ENCODE measurements at regions of chr17 and their contacts with region 1.

Region 1: DNA sequence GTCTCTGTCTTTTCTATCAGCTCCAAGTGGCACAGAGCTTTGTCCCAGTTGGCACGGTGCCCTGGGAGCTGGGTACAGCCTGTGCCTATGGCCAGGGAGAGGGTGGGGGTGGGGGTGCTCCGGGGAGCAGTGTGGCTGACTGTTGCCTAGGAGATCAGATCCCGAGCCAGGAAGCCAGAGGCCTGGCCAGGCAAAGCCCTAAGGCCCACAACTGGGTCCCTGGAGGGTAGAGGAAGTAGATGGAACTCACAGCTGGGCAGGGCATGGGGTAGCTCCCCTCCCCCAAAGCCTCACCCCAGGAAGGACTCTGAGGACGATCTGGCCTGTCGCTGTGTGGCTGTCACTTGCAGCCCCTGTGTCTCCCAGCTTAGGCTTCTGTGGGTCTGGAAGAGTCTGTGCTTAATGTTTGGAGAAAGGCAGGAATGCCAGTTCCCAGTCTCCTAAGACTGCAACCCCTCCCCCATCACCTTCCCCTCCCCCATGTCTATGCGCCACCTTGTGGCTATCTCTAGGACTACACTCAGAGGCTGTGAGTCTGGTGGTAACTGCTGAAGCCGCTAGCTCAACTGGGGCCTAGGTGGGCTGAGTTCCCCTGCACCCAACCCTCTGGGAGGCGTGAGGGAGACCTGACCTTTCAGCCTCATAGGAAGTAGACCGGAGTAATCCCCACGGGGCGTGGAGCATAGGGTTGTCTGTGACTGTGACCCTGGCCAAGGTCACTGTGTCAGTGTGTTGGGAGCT is 12.6 kb downstream of the THRA start:
- DNase-seq: peak; percentile 63
- H3K4me3 ChIP-seq: no peak overlapping the region
- H3K27ac ChIP-seq: no peak overlapping the region
- H3K4me1 ChIP-seq: peaks cover 13% of the 10 kb centered on the region
- H3K27me3 ChIP-seq: no peaks in the 10 kb centered on the region
- CTCF ChIP-seq: peak; percentile 68 to 91
- POLR2A ChIP-seq: no peak

Region 2: GRCh38 chr17:40026816-40027613 is 48.4 kb before region 1 on chr17:
- CTCF ChIA-PET with region 1: interaction called, 11 read pairs
- POLR2A ChIA-PET with region 1: no interaction called
- dilution Hi-C with region 1: no loop called
- intact Hi-C with region 1: no loop called
- DNase-seq: peak; percentile 74
- H3K4me3 ChIP-seq: no peak overlapping the region
- H3K27ac ChIP-seq: peak overlapping the region; percentile 99
- H3K4me1 ChIP-seq: peaks cover 48% of the 10 kb centered on the region
- H3K27me3 ChIP-seq: no peaks in the 10 kb centered on the region
- CTCF ChIP-seq: peak; percentile 81 to 93
- POLR2A ChIP-seq: no peak

Region 3: DNA sequence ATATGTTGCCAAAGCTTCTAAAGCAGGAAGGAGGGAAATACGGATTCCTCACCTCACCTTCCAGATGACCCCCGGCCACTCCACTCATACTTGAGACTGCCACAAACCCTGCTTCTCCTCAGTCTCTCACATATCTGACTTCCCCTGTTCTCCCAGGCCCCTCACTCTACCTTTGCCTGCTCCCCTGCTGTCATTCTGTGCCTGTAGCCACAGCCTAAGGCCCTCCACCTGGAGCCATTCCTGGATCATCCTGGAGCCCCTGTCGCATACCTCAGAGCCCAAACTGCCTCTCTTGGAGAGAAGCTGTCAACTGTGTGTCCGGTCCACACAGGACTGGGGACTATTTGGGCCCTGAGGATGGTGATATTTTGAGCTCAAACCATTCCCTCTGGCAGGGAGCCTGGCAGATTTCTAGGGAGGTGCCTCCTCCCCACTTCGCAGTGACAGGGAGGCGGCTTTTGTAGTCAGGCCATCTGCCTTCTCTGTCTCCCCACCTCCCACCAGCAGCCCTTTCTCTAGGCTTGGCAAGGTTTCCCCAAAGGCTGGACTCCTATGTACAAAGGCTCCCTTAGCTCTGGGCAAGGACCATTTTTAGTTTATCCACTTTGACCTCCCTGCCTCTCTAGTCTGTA is 18.9 kb before region 1 on chr17:
- CTCF ChIA-PET with region 1: interaction called, 34 read pairs
- POLR2A ChIA-PET with region 1: no interaction called
- dilution Hi-C with region 1: no loop called
- intact Hi-C with region 1: no loop called
- DNase-seq: no peak
- H3K4me3 ChIP-seq: no peak overlapping the region
- H3K27ac ChIP-seq: no peak overlapping the region
- H3K4me1 ChIP-seq: peaks cover 6% of the 10 kb centered on the region
- H3K27me3 ChIP-seq: no peaks in the 10 kb centered on the region
- CTCF ChIP-seq: no peak
- POLR2A ChIP-seq: no peak

Region 4: GRCh38 chr17:40086150-40087044 is 11.0 kb after region 1 on chr17:
- CTCF ChIA-PET with region 1: interaction called, 62 read pairs
- POLR2A ChIA-PET with region 1: no interaction called
- dilution Hi-C with region 1: no loop called
- intact Hi-C with region 1: no loop called
- DNase-seq: peak; percentile 40
- H3K4me3 ChIP-seq: no peak overlapping the region
- H3K27ac ChIP-seq: no peak overlapping the region
- H3K4me1 ChIP-seq: no peaks in the 10 kb centered on the region
- H3K27me3 ChIP-seq: no peaks in the 10 kb centered on the region
- CTCF ChIP-seq: peak; percentile 80 to 89
- POLR2A ChIP-seq: no peak

Region 5: DNA sequence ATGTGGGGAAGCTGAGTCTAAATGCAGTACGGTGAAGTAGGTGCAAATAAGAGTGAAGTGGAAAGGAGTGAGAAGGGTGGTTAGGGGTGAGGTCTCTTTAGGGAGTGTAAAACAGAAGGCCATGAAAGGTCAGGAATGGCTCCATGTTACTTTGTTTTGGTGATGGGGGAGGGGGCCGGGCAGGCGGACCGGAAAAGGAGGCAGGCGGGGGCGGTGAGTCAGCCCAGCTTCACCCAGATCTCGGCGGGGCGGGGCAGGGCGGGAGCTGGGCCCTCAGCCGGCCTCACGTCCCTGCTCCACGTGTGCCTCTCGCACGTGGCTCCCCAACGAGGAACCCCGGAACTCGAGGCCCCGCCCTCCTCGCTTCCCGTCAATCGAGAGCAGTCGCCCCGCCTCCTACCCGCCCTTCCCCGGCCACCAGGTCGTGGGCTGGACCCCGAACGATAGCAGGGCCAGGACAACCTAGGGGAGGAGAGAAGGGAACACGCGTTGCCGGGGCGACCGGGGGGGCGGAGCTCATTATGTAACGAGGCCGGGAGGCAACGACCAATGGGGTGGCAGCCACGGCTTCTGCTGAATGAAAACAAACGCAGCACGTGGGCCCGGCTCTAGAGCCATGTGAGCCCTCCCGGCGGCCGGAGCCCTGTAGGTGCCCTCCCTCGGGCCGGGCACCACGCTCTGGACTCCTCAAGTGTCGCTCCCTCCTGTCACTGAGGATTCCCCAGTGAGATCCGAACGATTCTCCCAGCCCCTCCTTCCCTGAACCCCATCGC is 23.7 kb after region 1 on chr17:
- CTCF ChIA-PET with region 1: interaction called, 15 read pairs
- POLR2A ChIA-PET with region 1: no interaction called
- dilution Hi-C with region 1: no loop called
- intact Hi-C with region 1: no loop called
- DNase-seq: peak; percentile 97
- H3K4me3 ChIP-seq: peak overlapping the region; percentile 26 to 60 (median 48)
- H3K27ac ChIP-seq: peak overlapping the region; percentile 77
- H3K4me1 ChIP-seq: peaks cover 39% of the 10 kb centered on the region
- H3K27me3 ChIP-seq: no peaks in the 10 kb centered on the region
- CTCF ChIP-seq: no peak
- POLR2A ChIP-seq: peak; percentile 53

Measured in endothelial cell of umbilical vein (primary cell).